Calu3 (cell line): ENCODE measurements at regions of chr4 and their contacts with region 1.

Region 1: GRCh38 chr4:138035781-138036258 is 206.3 kb downstream of the SLC7A11 start:
- DNase-seq: peak; percentile 28
- H3K4me3 Mint-ChIP-seq: no peak overlapping the region
- H3K27ac Mint-ChIP-seq: peak overlapping the region; percentile 52
- H3K4me1 Mint-ChIP-seq: peaks cover 10% of the 10 kb centered on the region
- H3K27me3 Mint-ChIP-seq: no peaks in the 10 kb centered on the region
- CTCF ChIP-seq: peak; percentile 56

Region 2: DNA sequence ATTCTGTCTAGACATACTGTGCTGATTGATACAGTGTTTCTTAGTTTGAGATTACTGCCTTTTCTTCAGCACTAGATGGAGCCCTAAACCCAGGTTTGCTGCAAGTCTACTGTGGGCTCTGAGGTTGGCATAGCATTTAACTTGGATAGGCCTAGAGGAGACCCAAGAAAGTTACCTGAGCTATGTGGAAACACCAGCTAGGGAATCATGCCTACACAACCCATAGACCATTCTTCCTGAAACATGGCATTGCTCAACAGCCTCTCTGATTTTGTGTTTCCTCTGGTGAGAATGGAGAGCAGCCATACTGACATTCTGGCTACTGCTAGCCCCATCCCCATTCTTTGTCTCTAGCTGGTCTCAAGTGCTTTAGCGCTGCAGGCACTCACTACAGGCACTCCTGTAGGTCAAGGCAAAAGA is 215.8 kb before region 1 on chr4:
- CTCF ChIA-PET with region 1: no interaction called
- intact Hi-C with region 1: loop called (anchors 1 kb)
- DNase-seq: peak; percentile 32
- H3K4me3 Mint-ChIP-seq: no peak overlapping the region
- H3K27ac Mint-ChIP-seq: no peak overlapping the region
- H3K4me1 Mint-ChIP-seq: no peaks in the 10 kb centered on the region
- H3K27me3 Mint-ChIP-seq: no peaks in the 10 kb centered on the region
- CTCF ChIP-seq: peak; percentile 54

Region 3: GRCh38 chr4:138090150-138090917 is 54.5 kb after region 1 on chr4:
- CTCF ChIA-PET with region 1: interaction called, 30 read pairs
- intact Hi-C with region 1: loop called (anchors 1 kb)
- DNase-seq: peak; percentile 72
- H3K4me3 Mint-ChIP-seq: peak overlapping the region; percentile 61
- H3K27ac Mint-ChIP-seq: peak overlapping the region; percentile 22
- H3K4me1 Mint-ChIP-seq: peaks cover 33% of the 10 kb centered on the region
- H3K27me3 Mint-ChIP-seq: no peaks in the 10 kb centered on the region
- CTCF ChIP-seq: peak; percentile 30

Region 4: GRCh38 chr4:138182838-138183426 is 147.1 kb after region 1 on chr4:
- CTCF ChIA-PET with region 1: interaction called, 14 read pairs
- intact Hi-C with region 1: loop called (anchors 2 kb)
- DNase-seq: peak; percentile 24
- H3K4me3 Mint-ChIP-seq: no peak overlapping the region
- H3K27ac Mint-ChIP-seq: peak overlapping the region; percentile 58
- H3K4me1 Mint-ChIP-seq: peaks cover 39% of the 10 kb centered on the region
- H3K27me3 Mint-ChIP-seq: no peaks in the 10 kb centered on the region
- CTCF ChIP-seq: peak; percentile 30

Region 5: DNA sequence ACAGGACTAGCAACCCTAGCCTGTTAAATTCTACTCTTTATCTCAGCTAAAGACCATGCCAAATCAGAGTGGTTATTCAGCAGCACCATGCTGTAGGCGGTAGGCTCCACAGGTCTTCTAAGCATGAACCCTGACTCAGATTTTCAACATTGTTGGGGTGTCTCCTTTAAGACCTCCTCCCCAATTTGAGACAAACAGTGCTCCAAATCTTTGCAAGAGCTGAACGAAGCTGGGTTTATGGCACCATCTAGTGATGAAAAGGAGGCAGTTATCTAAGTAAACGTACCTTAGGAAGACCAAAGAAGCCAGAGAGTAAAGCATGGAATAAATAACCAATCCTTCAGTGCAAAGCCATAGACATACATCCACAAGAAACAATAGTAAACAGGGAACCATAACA is 540.9 kb after region 1 on chr4:
- CTCF ChIA-PET with region 1: no interaction called
- intact Hi-C with region 1: loop called (anchors 1 kb)
- DNase-seq: peak; percentile 19
- H3K4me3 Mint-ChIP-seq: no peak overlapping the region
- H3K27ac Mint-ChIP-seq: no peak overlapping the region
- H3K4me1 Mint-ChIP-seq: peaks cover 9% of the 10 kb centered on the region
- H3K27me3 Mint-ChIP-seq: no peaks in the 10 kb centered on the region
- CTCF ChIP-seq: peak; percentile 33